ENCODE measurements at regions of chr2 and their contacts with region 1.

Region 1: GRCh38 chr2:157777427-157777826 is 98.7 kb downstream of the ACVR1 start:
- DNase-seq: peak; percentile 56 to 59
- H3K4me3 ChIP-seq: no peak overlapping the region
- H3K27ac ChIP-seq: no peak overlapping the region
- H3K4me1 ChIP-seq: no peaks in the 10 kb centered on the region
- H3K27me3 ChIP-seq: no peaks in the 10 kb centered on the region
- CTCF ChIP-seq: peak; percentile 62 to 80 (median 66)
- POLR2A ChIP-seq: no peak

Region 2: GRCh38 chr2:158006961-158007719 is 229.7 kb after region 1 on chr2:
- intact Hi-C with region 1: loop called (anchors 10 kb)
- DNase-seq: no peak
- H3K4me3 ChIP-seq: no peak overlapping the region
- H3K27ac ChIP-seq: no peak overlapping the region
- H3K4me1 ChIP-seq: no peaks in the 10 kb centered on the region
- H3K27me3 ChIP-seq: no peaks in the 10 kb centered on the region
- CTCF ChIP-seq: no peak
- POLR2A ChIP-seq: no peak

Measured in uterus (tissue), 4 donors.